Psoas muscle (tissue), 8 donors: ENCODE measurements at regions of chr10 and their contacts with region 1.

Region 1: DNA sequence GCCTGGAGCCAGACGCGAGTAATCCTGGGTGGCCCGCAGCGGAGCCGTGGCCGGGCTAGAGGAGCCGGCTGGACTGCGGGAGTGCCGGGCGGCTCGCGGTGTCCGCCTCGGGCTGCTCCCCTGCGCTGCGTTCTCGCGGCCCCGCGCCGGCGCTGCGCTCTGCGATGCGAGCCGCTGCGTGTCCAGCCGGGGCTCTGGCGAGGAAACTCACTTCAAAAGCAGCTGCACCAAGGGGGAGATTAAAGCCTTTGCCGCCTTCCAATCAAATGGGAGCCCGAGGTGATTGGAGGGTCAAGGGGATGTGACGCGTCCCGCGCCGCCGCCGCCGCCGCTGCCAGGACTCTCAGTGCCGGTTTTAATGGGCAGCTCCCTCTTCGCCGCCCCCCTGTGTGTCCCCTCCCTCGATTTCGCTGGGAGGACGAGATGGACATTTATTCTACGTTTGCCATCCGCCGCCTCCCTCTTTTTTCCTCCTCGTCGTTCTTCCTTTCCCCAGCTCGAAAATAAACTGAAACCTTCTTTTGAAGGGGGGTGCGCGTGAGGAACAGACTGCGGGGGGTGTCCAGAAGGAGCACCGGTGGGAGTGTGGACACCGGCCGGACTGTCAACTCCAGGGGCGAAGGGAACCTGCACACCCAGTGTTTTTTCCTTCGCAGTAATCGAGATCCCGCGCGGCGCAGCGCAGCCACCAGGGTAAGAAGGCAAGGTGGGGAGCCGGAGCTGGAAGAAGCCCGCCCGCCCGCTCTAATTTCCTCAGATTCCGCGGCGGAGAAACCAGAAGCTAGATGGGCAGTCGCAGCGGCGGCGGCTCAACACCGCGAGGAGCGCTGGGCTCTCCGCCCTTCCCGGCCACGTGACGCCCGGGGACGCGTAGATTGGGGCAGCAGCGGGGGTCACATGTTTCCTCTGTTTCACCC is at the start of gene ZNF503:
- DNase-seq: peak; percentile 97
- ATAC-seq: peak; percentile 82 to 86 (median 85)
- H3K4me3 ChIP-seq: peak within 1 kb of the TSS; percentile 90
- H3K27ac ChIP-seq: peak within 1 kb of the TSS; percentile 87
- H3K4me1 ChIP-seq: peaks cover 11% of the 10 kb centered on the region
- H3K27me3 ChIP-seq: peaks cover 4 to 74% (median 5%) of the 10 kb centered on the region in 3 donors
- CTCF ChIP-seq: no peak
- total RNA-seq, gene ZNF503: 2.3 to 5.7 (median 4.7) TPM

Region 2: DNA sequence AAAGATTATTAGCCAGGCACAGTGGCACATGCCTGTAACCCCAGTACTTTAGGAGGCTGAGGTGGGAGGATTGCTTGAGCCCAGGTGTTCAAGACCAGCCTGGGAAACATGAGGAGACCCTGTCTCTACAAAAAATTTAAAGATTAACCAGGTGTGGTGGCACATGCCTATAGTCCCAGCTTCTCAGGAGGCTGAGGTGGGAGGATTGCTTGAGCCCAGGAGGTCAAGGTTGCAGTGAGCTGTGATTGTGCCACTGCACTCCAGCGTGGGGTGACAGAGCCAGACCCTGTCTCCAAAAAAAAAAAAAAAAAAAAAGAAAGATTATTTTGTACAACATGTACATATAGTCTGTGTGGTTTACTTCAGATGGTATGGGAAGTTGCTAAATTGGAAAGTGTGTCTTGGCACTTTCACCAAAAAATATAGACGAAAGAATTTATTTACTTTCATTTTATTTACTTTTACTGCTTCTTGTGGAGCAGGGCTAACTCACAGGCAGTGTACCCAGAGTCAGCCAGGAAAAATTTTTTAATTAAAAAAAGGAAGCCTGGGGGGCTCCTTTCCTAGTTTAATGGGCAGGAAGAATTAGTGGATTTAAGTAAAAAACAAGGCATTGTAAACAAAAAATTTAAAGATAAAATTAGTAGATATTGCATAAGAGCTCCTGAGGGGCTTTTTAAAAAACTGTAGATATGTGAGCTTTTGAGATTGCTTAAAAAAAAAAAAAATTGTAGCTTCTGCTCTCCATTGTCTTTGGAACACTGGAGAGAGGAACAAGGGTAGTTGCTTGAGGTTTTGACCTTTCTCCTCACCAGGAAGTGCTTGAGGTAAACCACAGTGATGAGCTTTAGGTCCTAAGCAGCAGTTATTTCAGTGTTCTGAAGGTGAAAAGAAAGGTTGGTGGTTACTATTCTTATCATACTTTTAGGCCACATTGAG is 235.9 kb before region 1 on chr10:
- intact Hi-C with region 1: no loop called
- DNase-seq: no peak
- ATAC-seq: no peak
- H3K4me3 ChIP-seq: no peak overlapping the region
- H3K27ac ChIP-seq: peak overlapping the region; percentile 47
- H3K4me1 ChIP-seq: peaks cover 39% of the 10 kb centered on the region
- H3K27me3 ChIP-seq: no peaks in the 10 kb centered on the region
- CTCF ChIP-seq: no peak

Region 3: GRCh38 chr10:75640803-75641202 is 239.0 kb after region 1 on chr10:
- intact Hi-C with region 1: no loop called
- DNase-seq: no peak
- ATAC-seq: no peak
- H3K4me3 ChIP-seq: no peak overlapping the region
- H3K27ac ChIP-seq: no peak overlapping the region
- H3K4me1 ChIP-seq: no peaks in the 10 kb centered on the region
- H3K27me3 ChIP-seq: peaks cover 0 to 34% (median 3%) of the 10 kb centered on the region in 3 donors
- CTCF ChIP-seq: no peak

Region 4: GRCh38 chr10:75651417-75651816 is 249.6 kb after region 1 on chr10:
- intact Hi-C with region 1: loop called in 1 of 2 experiments (anchors 10 kb)
- DNase-seq: no peak
- ATAC-seq: no peak
- H3K4me3 ChIP-seq: no peak overlapping the region
- H3K27ac ChIP-seq: no peak overlapping the region
- H3K4me1 ChIP-seq: peaks cover 3% of the 10 kb centered on the region
- H3K27me3 ChIP-seq: peaks cover 0 to 7% (median 0%) of the 10 kb centered on the region in 3 donors
- CTCF ChIP-seq: no peak

Region 5: GRCh38 chr10:75922435-75922834 is 520.6 kb after region 1 on chr10:
- intact Hi-C with region 1: loop called (anchors 5 to 10 kb)
- DNase-seq: no peak
- ATAC-seq: no peak
- H3K4me3 ChIP-seq: no peak overlapping the region
- H3K27ac ChIP-seq: no peak overlapping the region
- H3K4me1 ChIP-seq: no peaks in the 10 kb centered on the region
- H3K27me3 ChIP-seq: peaks cover 0 to 2% (median 0%) of the 10 kb centered on the region in 3 donors
- CTCF ChIP-seq: no peak

Region 6: DNA sequence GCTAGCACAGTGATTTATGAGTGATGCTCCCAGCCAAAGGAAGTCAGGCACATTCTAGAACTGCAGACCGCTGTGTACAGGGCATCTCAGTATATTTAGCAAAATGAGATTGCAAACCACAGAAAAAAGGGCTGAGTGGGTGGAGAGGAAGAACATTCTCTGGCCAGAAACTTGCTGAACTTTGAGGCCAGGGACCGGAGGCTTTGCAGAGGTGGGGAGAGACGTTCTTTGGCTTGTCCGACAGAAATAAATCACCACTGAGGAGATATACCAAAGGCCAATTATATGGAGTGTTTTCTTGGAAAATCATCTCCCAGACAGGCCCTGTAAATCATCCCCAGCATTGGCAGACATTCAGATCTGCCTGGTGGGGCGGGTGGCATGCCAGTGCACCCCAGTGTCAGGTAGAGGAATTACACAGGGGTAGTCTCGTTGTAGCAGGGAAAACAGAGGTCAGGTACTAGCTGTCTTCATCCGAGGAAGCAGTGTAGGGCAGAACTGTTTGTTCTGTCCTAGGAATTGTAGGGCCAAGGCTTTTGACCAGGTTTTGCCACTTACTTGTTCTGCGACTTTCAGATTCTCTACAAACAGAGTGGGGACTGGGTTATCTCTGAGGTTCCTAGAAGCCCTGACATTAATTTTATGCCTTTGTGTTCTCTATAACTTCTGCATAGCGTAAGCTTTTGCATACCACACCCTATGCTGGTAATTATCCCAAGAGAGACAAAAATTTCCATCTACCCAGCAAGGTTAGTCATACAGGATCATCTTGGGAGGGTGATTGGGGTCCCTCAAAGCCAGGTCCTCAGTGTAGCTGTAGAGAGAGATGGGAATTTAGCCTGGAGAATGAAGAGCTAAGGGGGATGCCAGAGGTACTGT is 685.2 kb after region 1 on chr10:
- intact Hi-C with region 1: loop called (anchors 5 kb)
- DNase-seq: peak; percentile 64 to 80
- ATAC-seq: peak; percentile 94 to 98 (median 97)
- H3K4me3 ChIP-seq: no peak overlapping the region
- H3K27ac ChIP-seq: peak overlapping the region; percentile 77
- H3K4me1 ChIP-seq: peaks cover 26% of the 10 kb centered on the region
- H3K27me3 ChIP-seq: no peaks in the 10 kb centered on the region
- CTCF ChIP-seq: peak; percentile 81

Region 7: GRCh38 chr10:76311752-76312636 is 910.2 kb after region 1 on chr10:
- intact Hi-C with region 1: loop called in 1 of 2 experiments (anchors 5 kb)
- DNase-seq: no peak
- ATAC-seq: peak; percentile 51 to 87 (median 74)
- H3K4me3 ChIP-seq: no peak overlapping the region
- H3K27ac ChIP-seq: no peak overlapping the region
- H3K4me1 ChIP-seq: no peaks in the 10 kb centered on the region
- H3K27me3 ChIP-seq: no peaks in the 10 kb centered on the region
- CTCF ChIP-seq: peak; percentile 40